ENCODE measurements at regions of chr1 and their contacts with region 1.

Region 1: GRCh38 chr1:182629499-182630096 is 25.4 kb upstream of the RGS16 start:
- DNase-seq: peak; percentile 22 to 80 (median 52)
- H3K4me3 ChIP-seq: no peak overlapping the region
- H3K4me3 Mint-ChIP-seq: peak overlapping the region in 7 of 8 donors; percentile 24 to 65 (median 43)
- H3K27ac ChIP-seq: no peak overlapping the region
- H3K27ac Mint-ChIP-seq: peak overlapping the region in 5 of 7 donors; percentile 18 to 81 (median 26)
- H3K4me1 ChIP-seq: peaks cover 47% of the 10 kb centered on the region
- H3K4me1 Mint-ChIP-seq: peaks cover 37 to 67% (median 44%) of the 10 kb centered on the region in 4 donors
- H3K27me3 ChIP-seq: no peaks in the 10 kb centered on the region
- H3K27me3 Mint-ChIP-seq: no peaks in the 10 kb centered on the region

Region 2: GRCh38 chr1:182614796-182615454 is 14.7 kb before region 1 on chr1:
- CTCF ChIA-PET with region 1: interaction called, 3 read pairs
- POLR2A ChIA-PET with region 1: interaction called, 13 read pairs
- intact Hi-C with region 1: no loop called
- DNase-seq: peak in 4 of 5 donors; percentile 33 to 60 (median 34)
- H3K4me3 ChIP-seq: peak overlapping the region; percentile 46 to 73
- H3K4me3 Mint-ChIP-seq: peak overlapping the region; percentile 79 to 90 (median 86)
- H3K27ac ChIP-seq: peak overlapping the region; percentile 0
- H3K27ac Mint-ChIP-seq: peak overlapping the region; percentile 76 to 96 (median 95)
- H3K4me1 ChIP-seq: peaks cover 41% of the 10 kb centered on the region
- H3K4me1 Mint-ChIP-seq: peaks cover 30 to 47% (median 33%) of the 10 kb centered on the region in 4 donors
- H3K27me3 ChIP-seq: no peaks in the 10 kb centered on the region
- H3K27me3 Mint-ChIP-seq: peaks cover 2 to 15% of the 10 kb centered on the region in 2 donors